ENCODE measurements at regions of chr2 and their contacts with region 1.

Region 1: DNA sequence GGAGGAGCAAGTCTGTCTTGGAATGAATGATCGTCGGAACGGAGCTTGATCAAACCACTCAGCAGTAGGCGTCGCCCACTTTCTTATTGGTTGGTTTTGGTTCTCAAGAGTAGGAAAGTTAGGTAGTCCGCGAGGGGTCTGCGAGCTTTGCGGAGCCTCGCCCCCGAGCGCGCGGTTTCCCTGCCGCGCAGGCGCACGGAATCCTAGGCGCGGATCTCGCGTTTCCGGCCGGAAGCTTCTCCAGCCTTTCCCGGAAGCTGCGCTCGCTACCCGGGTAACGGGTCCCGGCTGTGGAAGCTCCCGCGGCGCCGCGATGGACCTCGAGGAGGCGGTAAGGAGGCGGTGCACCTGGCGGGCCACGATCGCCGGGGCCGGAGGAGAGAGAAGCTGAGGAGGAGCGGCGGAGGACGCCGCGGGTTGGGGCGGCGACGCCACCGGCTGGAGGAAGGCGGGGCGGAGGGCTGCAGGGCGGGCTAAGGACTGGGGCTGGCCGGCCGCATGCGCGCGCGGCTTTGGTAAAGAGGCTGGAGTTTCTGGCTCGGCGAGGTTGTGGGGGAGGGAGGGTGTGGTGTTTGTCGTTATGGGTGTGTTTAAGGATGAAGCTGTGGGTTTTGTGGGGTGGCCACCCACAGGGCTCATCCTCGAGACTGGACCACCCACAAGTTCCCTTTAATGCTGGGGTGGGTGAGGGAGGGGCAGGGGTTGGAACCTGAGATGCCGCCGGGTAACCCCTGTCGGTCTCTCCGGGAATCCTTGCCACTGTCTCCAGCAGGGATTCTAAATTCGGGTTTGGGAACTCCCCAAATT is at the start of gene TAF1B:
- DNase-seq: peak; percentile 86
- ATAC-seq: peak; percentile 87
- H3K4me3 Mint-ChIP-seq: peak within 1 kb of the TSS; percentile 94
- H3K27ac Mint-ChIP-seq: peak within 1 kb of the TSS; percentile 91
- H3K4me1 Mint-ChIP-seq: peaks cover 34% of the 10 kb centered on the region
- H3K27me3 Mint-ChIP-seq: no peaks in the 10 kb centered on the region
- CTCF ChIP-seq: no peak
- total RNA-seq, gene TAF1B: 26.4 and 28.7 TPM in 2 replicates

Region 2: DNA sequence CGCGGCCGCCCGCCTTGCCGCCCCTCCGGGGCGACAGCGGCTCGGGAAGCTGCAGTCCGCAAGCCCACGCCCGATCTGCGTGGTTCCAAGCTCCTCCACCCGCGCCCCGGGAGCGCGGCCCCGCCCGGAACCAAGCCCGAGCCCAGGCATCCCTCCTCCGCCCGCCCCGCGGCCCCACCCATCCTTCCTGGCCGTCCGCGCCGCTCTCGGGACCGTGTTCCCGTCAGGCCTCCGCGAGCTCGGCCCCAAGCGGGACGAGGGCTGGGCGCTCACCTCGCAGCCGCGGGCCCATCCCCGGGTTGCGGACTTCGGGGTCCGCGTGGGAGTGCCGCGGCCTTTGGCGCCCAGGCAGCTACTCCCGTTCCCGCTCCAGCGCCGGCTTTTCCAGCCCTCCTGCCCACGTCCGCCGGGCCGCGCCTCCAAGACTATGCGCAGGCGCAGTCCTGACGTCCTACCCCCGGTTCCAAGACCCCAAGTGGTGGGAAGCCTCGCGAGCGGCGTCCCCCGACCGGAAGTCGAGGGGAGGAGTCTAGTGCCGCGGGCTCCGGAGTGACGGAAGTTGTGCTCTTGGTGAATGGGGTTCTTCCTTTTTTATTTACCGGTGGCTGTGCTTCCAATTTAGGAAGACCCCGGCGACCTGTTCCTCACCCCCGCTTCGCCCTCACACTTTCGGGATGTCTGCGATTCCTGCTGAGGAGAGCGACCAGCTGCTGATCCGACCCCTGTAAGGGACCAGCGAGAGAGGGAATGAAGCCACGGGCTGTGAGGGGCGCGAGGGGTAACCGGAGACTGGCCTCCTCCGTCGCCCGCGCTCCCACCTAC is 420.1 kb before region 1 on chr2 and contains the starts of genes CPSF3 and ITGB1BP1:
- CTCF ChIA-PET with region 1: no interaction called
- POLR2A ChIA-PET with region 1: interaction called, 6 read pairs
- intact Hi-C with region 1: loop called (anchors 5 kb)
- DNase-seq: peak; percentile 96
- ATAC-seq: peak; percentile 86
- H3K4me3 Mint-ChIP-seq: no peak within 1 kb of the TSS
- H3K27ac Mint-ChIP-seq: peak within 1 kb of the TSS; percentile 91
- H3K4me1 Mint-ChIP-seq: peaks cover 22% of the 10 kb centered on the region
- H3K27me3 Mint-ChIP-seq: no peaks in the 10 kb centered on the region
- CTCF ChIP-seq: no peak
- total RNA-seq, gene CPSF3: 44.0 and 44.6 TPM in 2 replicates
- total RNA-seq, gene ITGB1BP1: 39.6 and 40.5 TPM in 2 replicates

Region 3: DNA sequence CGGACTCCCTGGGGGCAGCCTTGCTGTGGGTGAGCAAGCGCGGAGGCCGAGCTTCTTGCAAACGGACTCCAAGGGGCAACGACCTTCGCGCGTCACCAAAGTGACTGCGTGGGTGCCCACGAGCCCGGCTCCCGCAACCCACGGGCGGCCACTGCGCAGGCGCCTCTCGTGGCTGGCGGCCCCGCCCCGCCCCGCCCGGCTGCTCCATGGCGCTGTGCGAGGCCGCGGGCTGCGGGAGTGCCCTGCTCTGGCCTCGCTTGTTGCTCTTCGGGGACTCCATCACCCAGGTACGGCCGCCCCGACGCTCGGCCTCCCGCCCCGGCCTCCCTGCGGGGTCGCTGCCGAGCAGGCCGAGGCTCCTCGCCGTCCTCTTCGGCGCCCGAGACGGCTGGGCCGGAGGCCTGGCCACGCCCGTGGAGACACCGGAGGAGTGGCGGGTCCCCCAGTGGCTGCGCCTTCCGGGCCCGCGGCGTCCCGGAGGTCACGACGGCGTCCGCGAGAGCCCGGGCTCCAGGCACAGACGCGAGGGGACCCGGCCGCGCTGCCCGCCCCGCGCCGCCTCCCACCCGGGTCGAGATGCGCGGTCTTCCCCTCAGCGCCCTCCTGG is 369.0 kb before region 1 on chr2 and contains the start of gene IAH1:
- CTCF ChIA-PET with region 1: no interaction called
- POLR2A ChIA-PET with region 1: no interaction called
- intact Hi-C with region 1: loop called (anchors 10 kb)
- DNase-seq: peak; percentile 69
- ATAC-seq: peak; percentile 82
- H3K4me3 Mint-ChIP-seq: peak within 1 kb of the TSS; percentile 80
- H3K27ac Mint-ChIP-seq: peak within 1 kb of the TSS; percentile 61
- H3K4me1 Mint-ChIP-seq: peaks cover 39% of the 10 kb centered on the region
- H3K27me3 Mint-ChIP-seq: no peaks in the 10 kb centered on the region
- CTCF ChIP-seq: no peak
- total RNA-seq, gene IAH1: 47.1 and 49.0 TPM in 2 replicates

Region 4: GRCh38 chr2:9656270-9656766 is 187.1 kb before region 1 on chr2:
- CTCF ChIA-PET with region 1: no interaction called
- POLR2A ChIA-PET with region 1: no interaction called
- intact Hi-C with region 1: no loop called
- DNase-seq: no peak
- ATAC-seq: no peak
- H3K4me3 Mint-ChIP-seq: no peak overlapping the region
- H3K27ac Mint-ChIP-seq: no peak overlapping the region
- H3K4me1 Mint-ChIP-seq: peaks cover 7% of the 10 kb centered on the region
- H3K27me3 Mint-ChIP-seq: peaks cover under 1% of the 10 kb centered on the region
- CTCF ChIP-seq: no peak

Region 5: DNA sequence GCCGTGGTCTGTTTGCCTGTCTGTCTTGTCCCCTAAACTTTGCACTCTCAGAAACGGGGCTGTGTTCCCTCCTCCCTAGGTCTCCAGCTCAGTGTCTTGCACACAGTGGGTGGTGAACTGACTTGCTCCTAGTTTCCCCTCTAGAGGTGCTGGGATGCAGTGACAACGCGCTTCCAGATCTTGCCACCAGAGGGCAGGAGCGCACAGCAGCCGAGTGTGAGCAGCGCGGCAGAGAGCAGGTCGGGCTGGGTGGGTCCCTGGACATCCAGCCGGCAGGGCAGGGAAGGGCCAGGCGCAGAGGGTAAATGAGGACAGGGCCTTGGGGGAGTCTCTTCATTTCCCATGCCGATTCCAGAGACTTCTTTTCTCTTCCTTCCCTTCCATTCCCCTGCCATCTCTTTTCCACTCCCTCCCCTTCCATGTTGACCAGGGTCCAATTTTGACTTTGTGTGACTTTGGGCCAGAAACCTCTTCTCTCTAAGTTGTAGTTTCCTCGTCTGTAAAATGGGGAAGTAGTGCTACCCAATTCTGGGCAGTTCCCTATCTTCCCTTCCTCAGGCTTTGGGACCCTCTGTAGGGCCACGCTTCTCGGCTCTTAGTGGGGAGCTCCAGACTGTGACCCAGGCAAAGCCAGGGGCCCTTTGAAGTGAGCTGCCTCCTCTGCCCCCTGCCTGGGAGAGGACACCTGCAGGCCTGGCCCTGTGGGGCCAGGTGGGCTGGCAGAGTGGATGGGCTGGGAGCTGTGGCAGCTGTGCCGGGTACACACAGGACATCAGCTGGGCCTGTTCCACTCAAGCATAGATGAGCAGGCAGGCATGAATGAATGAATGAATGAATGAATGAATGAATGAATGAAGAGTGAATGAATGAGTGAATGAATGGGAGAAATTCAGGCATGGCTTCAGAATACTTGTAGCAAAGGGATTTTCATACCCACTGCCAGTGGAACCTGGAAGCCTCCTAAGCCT is 43.5 kb before region 1 on chr2:
- CTCF ChIA-PET with region 1: interaction called, 3 read pairs
- POLR2A ChIA-PET with region 1: no interaction called
- intact Hi-C with region 1: loop called (anchors 1 kb)
- DNase-seq: peak; percentile 82
- ATAC-seq: peak; percentile 97
- H3K4me3 Mint-ChIP-seq: peak overlapping the region; percentile 50
- H3K27ac Mint-ChIP-seq: peak overlapping the region; percentile 42
- H3K4me1 Mint-ChIP-seq: peaks cover 20% of the 10 kb centered on the region
- H3K27me3 Mint-ChIP-seq: peaks cover 3% of the 10 kb centered on the region
- CTCF ChIP-seq: peak; percentile 65

Region 6: GRCh38 chr2:9813312-9814133 is 29.9 kb before region 1 on chr2:
- CTCF ChIA-PET with region 1: interaction called, 3 read pairs
- POLR2A ChIA-PET with region 1: interaction called, 6 read pairs
- intact Hi-C with region 1: loop called (anchors 1 kb)
- DNase-seq: peak; percentile 59
- ATAC-seq: peak; percentile 89
- H3K4me3 Mint-ChIP-seq: no peak overlapping the region
- H3K27ac Mint-ChIP-seq: no peak overlapping the region
- H3K4me1 Mint-ChIP-seq: peaks cover 9% of the 10 kb centered on the region
- H3K27me3 Mint-ChIP-seq: peaks cover 4% of the 10 kb centered on the region
- CTCF ChIP-seq: peak; percentile 95

Region 7: DNA sequence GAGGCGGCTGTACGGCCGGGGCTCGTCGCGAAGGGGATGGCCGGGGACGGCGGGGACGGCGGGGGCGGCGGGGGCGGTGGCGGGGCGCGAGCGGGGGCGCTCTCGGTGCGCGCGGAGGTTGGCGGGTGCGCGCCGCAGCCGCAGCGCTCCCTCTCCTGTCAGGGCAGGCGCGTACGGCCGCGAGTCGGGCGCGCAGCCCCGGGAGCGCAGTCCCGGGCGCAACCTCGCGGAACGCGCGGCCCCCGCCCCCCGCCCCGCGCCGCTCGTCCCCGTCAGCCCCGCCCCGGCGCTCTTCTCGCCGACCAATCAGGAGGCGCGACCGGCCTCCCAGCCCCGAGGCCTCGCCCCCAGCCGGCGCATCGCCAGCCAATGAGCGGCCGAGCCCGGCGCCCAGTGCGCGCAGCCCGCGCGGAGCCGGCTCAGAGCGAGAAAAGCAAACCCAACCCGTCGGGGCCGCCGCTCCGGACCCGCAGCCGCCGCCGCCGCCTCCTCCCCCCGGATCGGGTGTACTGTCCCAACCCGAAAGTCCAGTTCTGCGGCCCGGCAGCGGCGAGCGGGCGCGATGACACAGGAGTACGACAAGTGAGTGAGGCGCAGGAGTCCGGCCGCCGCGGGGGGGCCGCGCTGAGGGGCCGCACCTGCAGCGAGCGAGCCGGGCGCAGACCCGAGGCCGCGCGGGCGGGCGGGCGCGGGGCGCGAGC is 108.0 kb after region 1 on chr2 and contains the start of gene GRHL1:
- CTCF ChIA-PET with region 1: no interaction called
- POLR2A ChIA-PET with region 1: interaction called, 3 read pairs
- intact Hi-C with region 1: loop called (anchors 1 kb)
- DNase-seq: peak; percentile 89
- ATAC-seq: peak; percentile 96
- H3K4me3 Mint-ChIP-seq: peak within 1 kb of the TSS; percentile 84
- H3K27ac Mint-ChIP-seq: peak within 1 kb of the TSS; percentile 65
- H3K4me1 Mint-ChIP-seq: peaks cover 14% of the 10 kb centered on the region
- H3K27me3 Mint-ChIP-seq: peaks cover 37% of the 10 kb centered on the region
- CTCF ChIP-seq: no peak
- total RNA-seq, gene GRHL1: 0.39 and 0.95 TPM in 2 replicates